ENCODE measurements at regions of chr22 and their contacts with region 1.

Region 1: DNA sequence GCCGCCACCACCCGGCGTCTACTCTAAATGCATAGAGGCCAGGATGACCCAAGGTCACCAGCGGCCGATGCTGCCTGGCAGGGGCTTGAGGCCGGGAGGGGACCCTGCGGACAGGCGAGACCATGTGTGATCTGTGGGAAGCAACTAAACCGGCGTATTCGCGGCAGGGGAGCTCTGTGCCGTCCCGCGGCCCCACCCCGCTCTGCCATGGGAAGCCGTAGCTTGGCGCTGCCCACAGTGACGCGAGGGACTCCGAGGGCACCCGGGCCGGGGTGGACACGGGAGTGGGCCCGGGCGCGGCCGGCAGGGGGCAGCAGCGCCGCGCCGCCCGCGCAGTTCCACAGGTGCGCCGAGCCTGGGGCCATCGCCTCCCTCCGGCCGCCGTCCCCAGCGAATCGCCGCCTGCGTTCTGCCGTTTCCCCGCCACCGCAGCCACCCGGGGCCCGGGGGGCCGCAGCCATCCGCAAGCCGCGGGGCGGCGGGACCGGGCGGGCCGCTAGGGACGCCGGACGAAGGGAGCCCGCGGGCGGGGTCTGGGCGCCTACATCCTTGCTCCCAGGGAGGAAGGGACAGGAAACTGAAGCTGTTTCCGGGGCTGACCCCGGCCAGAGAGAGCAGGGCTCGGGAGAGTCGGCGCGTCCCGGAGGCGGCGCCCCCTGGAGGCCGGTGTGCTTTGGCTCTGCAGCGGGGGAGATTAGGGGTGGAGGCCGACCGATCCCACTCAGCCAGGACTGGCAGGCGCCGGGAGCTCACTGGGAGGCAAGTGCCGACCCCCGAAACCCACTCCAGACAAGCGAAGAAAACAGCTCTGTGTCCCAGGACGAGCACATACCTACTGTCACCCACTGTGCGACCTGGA is 12.5 kb upstream of the HDHD5 start:
- DNase-seq: peak; percentile 87
- ATAC-seq: peak; percentile 89
- H3K4me3 ChIP-seq: peak overlapping the region; percentile 16 to 69 (median 58)
- H3K4me3 Mint-ChIP-seq: peak overlapping the region; percentile 86
- H3K27ac ChIP-seq: peak overlapping the region in 1 of 2 donors; percentile 6
- H3K27ac Mint-ChIP-seq: peak overlapping the region; percentile 73
- H3K4me1 ChIP-seq: peaks cover 2 to 11% of the 10 kb centered on the region in 2 donors
- H3K4me1 Mint-ChIP-seq: peaks cover 8% of the 10 kb centered on the region
- H3K27me3 ChIP-seq: no peaks in the 10 kb centered on the region
- H3K27me3 Mint-ChIP-seq: peaks cover 3% of the 10 kb centered on the region
- CTCF ChIP-seq: peak; percentile 92

Region 2: DNA sequence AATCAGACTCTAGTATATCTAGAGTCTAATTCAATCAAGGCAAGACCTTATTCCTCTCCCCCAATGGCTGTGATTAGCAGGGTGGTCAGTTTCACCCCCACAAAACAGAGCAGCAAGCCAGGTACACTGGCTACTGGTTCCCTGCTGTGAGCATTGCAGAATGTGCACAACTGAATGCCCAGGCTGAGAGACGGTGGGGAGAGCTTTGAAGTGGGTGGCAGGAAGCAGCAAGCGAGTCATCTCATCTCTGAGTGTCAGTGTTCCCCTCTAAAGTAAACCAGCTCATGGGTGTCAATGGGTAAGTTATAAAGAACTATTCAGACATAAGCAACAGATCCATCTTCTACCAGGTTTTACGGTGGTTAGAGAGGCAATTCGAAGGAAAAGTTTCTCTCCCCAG is 201.1 kb before region 1 on chr22:
- CTCF ChIA-PET with region 1: no interaction called
- POLR2A ChIA-PET with region 1: no interaction called
- intact Hi-C with region 1: no loop called
- DNase-seq: no peak
- ATAC-seq: no peak
- H3K4me3 ChIP-seq: no peak overlapping the region
- H3K4me3 Mint-ChIP-seq: no peak overlapping the region
- H3K27ac ChIP-seq: no peak overlapping the region
- H3K27ac Mint-ChIP-seq: no peak overlapping the region
- H3K4me1 ChIP-seq: no peaks in the 10 kb centered on the region
- H3K4me1 Mint-ChIP-seq: no peaks in the 10 kb centered on the region
- H3K27me3 ChIP-seq: peaks cover 0 to 4% (median 0%) of the 10 kb centered on the region in 4 experiments
- H3K27me3 Mint-ChIP-seq: peaks cover 30% of the 10 kb centered on the region
- CTCF ChIP-seq: no peak

Region 3: GRCh38 chr22:17077255-17077654 is 94.3 kb before region 1 on chr22:
- CTCF ChIA-PET with region 1: interaction called, 58 read pairs
- POLR2A ChIA-PET with region 1: no interaction called
- intact Hi-C with region 1: loop called (anchors 1 kb)
- DNase-seq: no peak
- ATAC-seq: no peak
- H3K4me3 ChIP-seq: no peak overlapping the region
- H3K4me3 Mint-ChIP-seq: no peak overlapping the region
- H3K27ac ChIP-seq: no peak overlapping the region
- H3K27ac Mint-ChIP-seq: no peak overlapping the region
- H3K4me1 ChIP-seq: no peaks in the 10 kb centered on the region
- H3K4me1 Mint-ChIP-seq: no peaks in the 10 kb centered on the region
- H3K27me3 ChIP-seq: peaks cover 0 to 9% (median 1%) of the 10 kb centered on the region in 4 experiments
- H3K27me3 Mint-ChIP-seq: no peaks in the 10 kb centered on the region
- CTCF ChIP-seq: no peak

Region 4: GRCh38 chr22:17120281-17120680 is 51.3 kb before region 1 on chr22:
- CTCF ChIA-PET with region 1: no interaction called
- POLR2A ChIA-PET with region 1: no interaction called
- intact Hi-C with region 1: no loop called
- DNase-seq: peak; percentile 64
- ATAC-seq: peak; percentile 75
- H3K4me3 ChIP-seq: no peak overlapping the region
- H3K4me3 Mint-ChIP-seq: peak overlapping the region; percentile 2
- H3K27ac ChIP-seq: no peak overlapping the region
- H3K27ac Mint-ChIP-seq: no peak overlapping the region
- H3K4me1 ChIP-seq: peaks cover 34 to 40% of the 10 kb centered on the region in 2 donors
- H3K4me1 Mint-ChIP-seq: peaks cover 41% of the 10 kb centered on the region
- H3K27me3 ChIP-seq: peaks cover 0 to 38% (median 13%) of the 10 kb centered on the region in 4 experiments
- H3K27me3 Mint-ChIP-seq: peaks cover 26% of the 10 kb centered on the region
- CTCF ChIP-seq: no peak

Region 5: GRCh38 chr22:17190702-17191101 is 19.2 kb after region 1 on chr22:
- CTCF ChIA-PET with region 1: interaction called, 12 read pairs
- POLR2A ChIA-PET with region 1: no interaction called
- intact Hi-C with region 1: no loop called
- DNase-seq: no peak
- ATAC-seq: no peak
- H3K4me3 ChIP-seq: no peak overlapping the region
- H3K4me3 Mint-ChIP-seq: no peak overlapping the region
- H3K27ac ChIP-seq: no peak overlapping the region
- H3K27ac Mint-ChIP-seq: no peak overlapping the region
- H3K4me1 ChIP-seq: no peaks in the 10 kb centered on the region
- H3K4me1 Mint-ChIP-seq: no peaks in the 10 kb centered on the region
- H3K27me3 ChIP-seq: no peaks in the 10 kb centered on the region
- H3K27me3 Mint-ChIP-seq: no peaks in the 10 kb centered on the region
- CTCF ChIP-seq: no peak

Region 6: GRCh38 chr22:17213976-17214375 is 42.4 kb after region 1 on chr22:
- CTCF ChIA-PET with region 1: interaction called, 17 read pairs
- POLR2A ChIA-PET with region 1: interaction called, 7 read pairs
- intact Hi-C with region 1: no loop called
- DNase-seq: peak; percentile 50
- ATAC-seq: no peak
- H3K4me3 ChIP-seq: no peak overlapping the region
- H3K4me3 Mint-ChIP-seq: peak overlapping the region; percentile 19
- H3K27ac ChIP-seq: peak overlapping the region in 1 of 2 donors; percentile 81
- H3K27ac Mint-ChIP-seq: peak overlapping the region; percentile 88
- H3K4me1 ChIP-seq: peaks cover 30 to 40% of the 10 kb centered on the region in 2 donors
- H3K4me1 Mint-ChIP-seq: peaks cover 46% of the 10 kb centered on the region
- H3K27me3 ChIP-seq: no peaks in the 10 kb centered on the region
- H3K27me3 Mint-ChIP-seq: no peaks in the 10 kb centered on the region
- CTCF ChIP-seq: peak; percentile 54

Region 7: DNA sequence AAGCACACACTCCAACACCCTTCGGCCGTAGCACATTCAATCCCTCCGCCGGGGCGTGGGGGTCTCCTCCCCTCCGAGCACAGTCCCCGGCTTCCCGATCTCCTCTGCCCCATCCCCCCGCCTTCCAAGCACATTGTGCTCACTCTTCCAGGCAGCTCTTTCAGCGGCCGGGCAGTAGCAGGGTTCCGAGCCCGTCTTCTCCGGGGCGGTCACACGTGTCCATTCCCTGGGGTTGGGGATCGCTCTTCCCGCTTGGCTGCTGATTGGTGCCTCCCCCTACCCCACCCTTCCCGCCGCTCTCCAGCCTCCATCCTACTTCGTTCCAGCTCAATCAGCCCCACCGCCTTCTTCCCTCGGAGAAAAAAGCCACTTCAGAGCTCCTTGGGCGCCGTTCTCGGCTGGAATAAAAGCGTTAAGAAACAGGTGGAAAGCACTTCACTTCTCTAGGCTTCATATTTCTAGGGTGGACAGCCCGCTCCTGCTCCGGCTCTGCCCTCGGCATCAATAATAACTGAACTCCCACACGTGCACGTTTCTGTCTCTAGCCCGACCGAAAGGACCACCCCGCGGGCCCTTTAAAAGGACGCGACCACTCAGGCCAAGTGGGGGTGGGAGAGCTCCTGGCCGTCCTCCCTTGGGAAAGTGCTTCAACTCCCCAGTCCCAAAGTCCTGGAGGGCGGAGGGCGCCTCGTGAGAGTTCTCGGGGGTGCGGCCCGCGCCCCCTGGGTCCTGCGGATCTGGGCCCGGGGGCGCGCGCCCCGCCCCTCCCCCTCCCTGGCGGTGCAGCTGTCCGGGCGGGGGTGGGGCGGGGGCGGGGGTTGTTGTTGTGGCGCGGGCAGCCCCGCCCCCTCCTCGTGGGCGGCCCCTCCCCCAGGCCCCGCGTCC is 197.3 kb after region 1 on chr22:
- CTCF ChIA-PET with region 1: interaction called, 6 read pairs
- POLR2A ChIA-PET with region 1: interaction called, 3 read pairs
- intact Hi-C with region 1: loop called (anchors 5 kb)
- DNase-seq: peak; percentile 64
- ATAC-seq: peak; percentile 73
- H3K4me3 ChIP-seq: peak overlapping the region; percentile 11 to 65 (median 50)
- H3K4me3 Mint-ChIP-seq: peak overlapping the region; percentile 89
- H3K27ac ChIP-seq: no peak overlapping the region
- H3K27ac Mint-ChIP-seq: peak overlapping the region; percentile 47
- H3K4me1 ChIP-seq: peaks cover 27 to 34% of the 10 kb centered on the region in 2 donors
- H3K4me1 Mint-ChIP-seq: peaks cover 31% of the 10 kb centered on the region
- H3K27me3 ChIP-seq: peaks cover 0 to 44% (median 25%) of the 10 kb centered on the region in 4 experiments
- H3K27me3 Mint-ChIP-seq: peaks cover 45% of the 10 kb centered on the region
- CTCF ChIP-seq: no peak

Region 8: DNA sequence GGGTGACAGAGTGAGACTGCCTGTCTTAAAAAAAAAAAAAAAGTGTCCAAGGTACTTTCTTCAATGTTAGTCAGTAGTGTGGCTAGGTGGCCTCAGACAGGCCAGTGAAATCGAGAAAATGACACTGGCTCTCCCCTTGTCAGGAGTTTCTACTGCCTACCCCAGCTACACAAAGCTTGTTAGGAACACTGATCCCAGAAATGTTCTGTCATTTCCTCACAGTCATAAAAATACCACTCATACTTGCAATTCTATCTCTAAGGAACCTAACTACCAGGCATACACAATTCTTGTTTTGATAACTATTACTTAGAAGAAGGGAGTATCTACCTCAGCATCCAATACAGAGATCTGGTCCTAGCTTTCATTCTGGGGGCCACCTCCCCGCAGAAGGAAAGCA is 425.7 kb after region 1 on chr22:
- CTCF ChIA-PET with region 1: no interaction called
- POLR2A ChIA-PET with region 1: no interaction called
- intact Hi-C with region 1: loop called (anchors 2 kb)
- DNase-seq: no peak
- ATAC-seq: no peak
- H3K4me3 ChIP-seq: no peak overlapping the region
- H3K4me3 Mint-ChIP-seq: no peak overlapping the region
- H3K27ac ChIP-seq: no peak overlapping the region
- H3K27ac Mint-ChIP-seq: no peak overlapping the region
- H3K4me1 ChIP-seq: peaks cover 26 to 27% of the 10 kb centered on the region in 2 donors
- H3K4me1 Mint-ChIP-seq: peaks cover 30% of the 10 kb centered on the region
- H3K27me3 ChIP-seq: no peaks in the 10 kb centered on the region
- H3K27me3 Mint-ChIP-seq: no peaks in the 10 kb centered on the region
- CTCF ChIP-seq: no peak

Measured in B cell (primary cell).